SK-N-SH (cell line): ENCODE measurements at regions of chr4 and their contacts with region 1.

Region 1: GRCh38 chr4:53015681-53016080 is 153.6 kb downstream of the RASL11B start:
- DNase-seq: peak; percentile 36
- H3K4me3 ChIP-seq: no peak overlapping the region; a peak in 1 of 4 replicates
- H3K27ac ChIP-seq: peak overlapping the region in 1 of 2 experiments; percentile 100; a peak in 2 of 4 replicates
- H3K4me1 ChIP-seq: peaks cover 51 to 56% of the 10 kb centered on the region in 2 experiments
- H3K27me3 ChIP-seq: no peaks in the 10 kb centered on the region
- CTCF ChIP-seq: peak; percentile 87
- EP300 ChIP-seq: peak in 1 of 2 experiments; percentile 90; a peak in 2 of 4 replicates
- RAD21 ChIP-seq: peak; percentile 99

Region 2: DNA sequence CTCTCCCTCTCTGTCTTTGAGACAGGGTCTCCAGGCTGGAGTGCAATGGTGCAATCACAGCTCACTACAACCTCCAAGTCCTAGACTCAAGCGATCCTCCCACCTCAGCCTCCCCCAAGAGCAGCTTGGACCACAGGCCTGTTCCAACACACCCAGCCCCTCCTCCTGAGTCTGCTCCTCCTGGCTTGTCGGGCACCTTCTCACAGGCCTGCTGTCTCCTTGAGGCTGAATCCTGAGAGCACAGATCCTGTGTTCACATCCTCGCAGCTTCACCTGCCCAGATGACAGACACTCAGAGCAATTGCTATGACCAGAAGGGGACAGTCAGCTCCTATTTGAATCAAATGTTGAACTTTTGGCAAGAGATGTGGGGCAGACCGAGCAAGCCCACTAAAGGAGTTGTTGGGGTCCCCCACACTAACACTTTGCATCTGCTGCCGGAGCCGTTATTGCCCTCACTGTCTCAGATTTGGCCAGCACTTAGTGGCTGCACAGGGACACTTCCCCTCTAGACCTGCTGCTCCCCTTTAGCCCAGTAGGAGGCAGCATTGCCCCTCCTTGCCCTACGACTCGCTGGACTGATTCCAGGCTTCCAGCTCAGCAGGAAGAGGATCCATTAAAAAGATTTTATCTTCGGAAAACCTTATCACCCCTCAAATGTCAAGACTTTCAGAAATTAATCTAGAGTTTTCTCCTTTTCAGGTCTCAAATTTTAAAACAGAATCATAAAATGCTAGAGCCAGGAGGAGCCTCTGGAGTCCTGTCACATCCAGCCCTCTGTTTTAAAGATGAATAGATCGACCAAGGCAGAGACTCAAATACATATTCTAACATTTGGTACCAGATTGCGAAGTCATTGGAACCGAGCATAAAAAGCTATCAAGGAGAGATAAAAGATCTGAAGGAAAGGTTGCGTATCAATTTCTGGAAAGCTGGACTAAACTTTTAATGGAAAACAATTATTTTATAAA is 470.3 kb before region 1 on chr4:
- CTCF ChIA-PET with region 1: interaction called, 10 read pairs
- POLR2A ChIA-PET with region 1: no interaction called
- DNase-seq: peak; percentile 79
- H3K4me3 ChIP-seq: peak overlapping the region; percentile 27 to 46; a peak in 2 of 4 replicates
- H3K27ac ChIP-seq: peak overlapping the region in 1 of 2 experiments; percentile 47; a peak in 2 of 4 replicates
- H3K4me1 ChIP-seq: peaks cover 0 to 8% of the 10 kb centered on the region in 2 experiments; a peak in 2 of 4 replicates
- H3K27me3 ChIP-seq: no peaks in the 10 kb centered on the region
- CTCF ChIP-seq: peak; percentile 96
- EP300 ChIP-seq: peak in 1 of 2 experiments; percentile 49; a peak in 1 of 4 replicates
- RAD21 ChIP-seq: peak; percentile 98

Region 3: GRCh38 chr4:52743444-52744019 is 272.1 kb before region 1 on chr4:
- CTCF ChIA-PET with region 1: no interaction called
- POLR2A ChIA-PET with region 1: no interaction called
- DNase-seq: no peak
- H3K4me3 ChIP-seq: no peak overlapping the region
- H3K27ac ChIP-seq: no peak overlapping the region
- H3K4me1 ChIP-seq: no peaks in the 10 kb centered on the region
- H3K27me3 ChIP-seq: no peaks in the 10 kb centered on the region; the same call in 1 of the 2 replicates
- CTCF ChIP-seq: no peak
- EP300 ChIP-seq: no peak
- RAD21 ChIP-seq: no peak

Region 4: DNA sequence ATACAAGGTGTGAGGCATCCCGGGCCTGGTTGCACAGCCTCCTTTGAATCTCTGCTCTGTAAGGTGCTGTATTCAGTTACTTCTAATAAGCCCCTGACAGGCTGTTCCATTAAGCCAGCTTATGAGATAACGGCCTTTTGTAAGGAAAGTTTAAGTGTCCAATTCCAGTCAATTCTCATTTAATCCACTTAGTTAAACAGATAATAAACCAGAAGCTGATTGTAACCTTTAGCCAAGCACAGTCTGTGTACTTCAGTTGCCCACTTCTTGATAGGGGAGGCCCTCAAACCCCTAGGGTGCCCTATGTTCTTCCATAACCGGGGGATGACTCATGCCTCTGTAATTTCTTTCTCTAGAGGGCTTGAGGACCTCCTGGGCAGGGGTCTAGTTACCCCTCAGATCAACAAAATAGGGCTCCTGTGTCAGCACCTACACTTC is 90.1 kb before region 1 on chr4:
- CTCF ChIA-PET with region 1: no interaction called
- POLR2A ChIA-PET with region 1: no interaction called
- DNase-seq: no peak
- H3K4me3 ChIP-seq: no peak overlapping the region
- H3K27ac ChIP-seq: no peak overlapping the region; a peak in 1 of 4 replicates
- H3K4me1 ChIP-seq: peaks cover 4 to 12% of the 10 kb centered on the region in 2 experiments; a peak in 3 of 4 replicates
- H3K27me3 ChIP-seq: no peaks in the 10 kb centered on the region
- CTCF ChIP-seq: no peak
- EP300 ChIP-seq: no peak
- RAD21 ChIP-seq: no peak

Region 5: DNA sequence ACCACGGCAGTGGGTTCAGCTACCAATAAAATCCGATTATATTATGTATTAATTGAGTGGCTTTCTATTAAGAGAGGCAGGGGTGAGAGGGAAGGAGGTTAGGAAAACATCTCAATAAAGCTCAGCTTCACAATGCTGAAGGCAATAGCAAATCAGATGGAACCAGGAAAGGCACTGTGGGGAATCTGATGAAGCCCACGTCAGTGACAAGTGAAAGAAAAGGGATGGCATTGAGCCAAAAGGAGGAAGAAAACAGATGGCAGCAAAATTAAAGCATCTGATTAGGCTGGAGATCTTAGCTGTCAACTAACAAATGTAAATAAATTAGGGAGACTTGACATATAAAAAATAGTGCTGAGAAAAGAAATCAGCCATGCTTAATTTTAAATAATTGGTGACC is 27.4 kb after region 1 on chr4:
- CTCF ChIA-PET with region 1: interaction called, 108 read pairs
- POLR2A ChIA-PET with region 1: interaction called, 3 read pairs
- DNase-seq: no peak
- H3K4me3 ChIP-seq: no peak overlapping the region
- H3K27ac ChIP-seq: peak overlapping the region in 1 of 2 experiments; percentile 97; a peak in 2 of 4 replicates
- H3K4me1 ChIP-seq: peaks cover 5 to 23% of the 10 kb centered on the region in 2 experiments; a peak in 3 of 4 replicates
- H3K27me3 ChIP-seq: no peaks in the 10 kb centered on the region
- CTCF ChIP-seq: no peak
- EP300 ChIP-seq: peak in 1 of 2 experiments; percentile 84; a peak in 1 of 4 replicates
- RAD21 ChIP-seq: 0 out of 2 replicates have a peak, but pooled peaks have one; percentile 4

Region 6: GRCh38 chr4:53196882-53197771 is 181.4 kb after region 1 on chr4:
- CTCF ChIA-PET with region 1: interaction called, 32 read pairs
- POLR2A ChIA-PET with region 1: interaction called, 3 read pairs
- DNase-seq: peak; percentile 24
- H3K4me3 ChIP-seq: peak overlapping the region; percentile 31 to 44; a peak in 3 of 4 replicates
- H3K27ac ChIP-seq: peak overlapping the region; percentile 65 to 99
- H3K4me1 ChIP-seq: peaks cover 12 to 36% of the 10 kb centered on the region in 2 experiments; a peak in 3 of 4 replicates
- H3K27me3 ChIP-seq: no peaks in the 10 kb centered on the region
- CTCF ChIP-seq: peak; percentile 89
- EP300 ChIP-seq: no peak
- RAD21 ChIP-seq: peak; percentile 91

Region 7: DNA sequence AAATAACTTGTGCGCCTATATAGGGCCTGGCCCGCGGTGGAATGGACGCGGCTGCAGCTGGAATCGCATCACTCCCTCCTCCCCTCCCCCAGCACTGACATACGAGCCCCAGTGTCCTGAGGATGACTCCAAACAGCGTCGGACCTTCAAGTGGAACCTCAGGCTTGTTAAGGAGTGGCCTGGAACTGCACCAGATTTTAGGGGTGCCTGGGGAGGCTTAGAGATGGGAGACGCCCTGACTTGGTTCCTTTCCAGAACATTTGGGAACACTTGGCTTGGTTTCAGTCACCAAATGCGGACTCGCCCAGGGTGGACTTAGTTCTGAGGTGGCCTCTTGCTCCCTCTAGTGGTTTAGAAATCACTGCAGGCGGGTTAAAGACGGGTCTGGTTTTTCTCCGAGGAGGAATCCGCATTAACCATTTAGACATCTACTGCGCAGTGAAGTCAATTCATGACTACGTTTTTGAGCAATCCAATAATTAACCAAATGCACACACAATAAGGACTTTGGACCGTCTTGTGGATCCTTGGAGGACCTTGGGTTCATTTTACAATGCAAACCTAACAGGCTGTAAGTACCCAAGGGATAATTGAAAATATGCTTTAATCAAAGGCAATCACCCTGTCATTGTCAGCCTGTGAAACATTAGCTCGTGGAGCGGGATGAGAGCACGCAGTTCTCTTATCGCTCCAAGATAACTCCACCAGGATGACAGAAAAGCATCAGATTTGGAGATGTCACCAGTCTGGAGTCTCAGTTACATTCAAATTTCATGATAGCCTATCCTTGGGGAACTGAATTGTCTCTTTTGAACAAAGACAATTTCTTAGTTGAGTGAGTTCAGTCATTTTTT is 1202.2 kb after region 1 on chr4:
- CTCF ChIA-PET with region 1: interaction called, 35 read pairs
- POLR2A ChIA-PET with region 1: interaction called, 5 read pairs
- DNase-seq: peak; percentile 81
- H3K4me3 ChIP-seq: peak overlapping the region; percentile 45 to 54
- H3K27ac ChIP-seq: peak overlapping the region in 1 of 2 experiments; percentile 71; a peak in 1 of 4 replicates
- H3K4me1 ChIP-seq: peaks cover 0 to 7% of the 10 kb centered on the region in 2 experiments; a peak in 3 of 4 replicates
- H3K27me3 ChIP-seq: no peaks in the 10 kb centered on the region
- CTCF ChIP-seq: peak; percentile 96
- EP300 ChIP-seq: peak; percentile 24 to 56; a peak in 2 of 4 replicates
- RAD21 ChIP-seq: peak; percentile 94